Left ventricle myocardium superior (tissue), 1 donor: ENCODE measurements at regions of chr7 and their contacts with region 1.

Region 1: GRCh38 chr7:112481833-112482670 is 1.3 kb downstream of the LSMEM1 start:
- DNase-seq: peak; percentile 33
- ATAC-seq: peak; percentile 86

Region 2: GRCh38 chr7:111873963-111874690 is 607.9 kb before region 1 on chr7:
- intact Hi-C with region 1: no loop called
- DNase-seq: no peak
- ATAC-seq: no peak

Region 3: GRCh38 chr7:112452102-112452888 is 29.8 kb before region 1 on chr7:
- intact Hi-C with region 1: loop called (anchors 2 kb)
- DNase-seq: peak; percentile 52
- ATAC-seq: peak; percentile 5

Region 4: DNA sequence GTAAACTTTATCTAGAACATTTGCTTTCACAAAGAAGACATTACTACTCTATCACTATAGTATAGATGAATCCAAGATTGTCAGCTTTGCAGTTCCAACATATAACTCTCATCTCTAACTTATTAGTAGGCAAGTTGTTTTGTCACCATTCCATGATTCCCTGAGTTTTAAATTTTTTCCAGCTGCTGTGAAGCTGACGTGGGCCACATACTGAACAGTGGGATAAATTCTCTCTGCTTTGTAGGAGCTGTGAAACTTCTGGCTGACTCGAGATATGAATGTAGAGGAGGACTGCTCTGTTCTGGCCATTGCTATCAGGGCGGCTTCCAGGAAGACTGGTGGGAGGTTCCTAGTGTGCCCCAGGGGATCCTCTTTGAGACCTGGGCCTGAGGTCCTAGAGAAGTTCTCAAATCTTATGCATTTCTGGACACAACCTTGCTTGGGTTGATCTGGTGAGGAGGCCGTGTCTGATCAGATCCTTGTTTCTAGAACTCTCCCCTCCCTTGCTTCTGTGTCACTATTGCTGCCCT is 56.7 kb after region 1 on chr7:
- intact Hi-C with region 1: no loop called
- DNase-seq: no peak
- ATAC-seq: no peak

Region 5: GRCh38 chr7:112853422-112853821 is 371.4 kb after region 1 on chr7:
- intact Hi-C with region 1: no loop called
- DNase-seq: no peak
- ATAC-seq: no peak